ENCODE measurements at regions of chr2 and their contacts with region 1.

Region 1: GRCh38 chr2:207288628-207289027 is 122.9 kb upstream of the KLF7 start:
- DNase-seq: peak; percentile 63
- ATAC-seq: peak; percentile 40
- H3K4me3 Mint-ChIP-seq: no peak overlapping the region
- H3K27ac Mint-ChIP-seq: no peak overlapping the region
- H3K4me1 Mint-ChIP-seq: peaks cover 75% of the 10 kb centered on the region
- H3K27me3 Mint-ChIP-seq: peaks cover 2% of the 10 kb centered on the region

Region 2: GRCh38 chr2:206603275-206603674 is 685.4 kb before region 1 on chr2:
- CTCF ChIA-PET with region 1: no interaction called
- POLR2A ChIA-PET with region 1: no interaction called
- intact Hi-C with region 1: no loop called
- DNase-seq: no peak
- ATAC-seq: no peak
- H3K4me3 Mint-ChIP-seq: no peak overlapping the region
- H3K27ac Mint-ChIP-seq: no peak overlapping the region
- H3K4me1 Mint-ChIP-seq: no peaks in the 10 kb centered on the region
- H3K27me3 Mint-ChIP-seq: peaks cover 5% of the 10 kb centered on the region

Region 3: GRCh38 chr2:207311316-207312005 is 22.8 kb after region 1 on chr2:
- CTCF ChIA-PET with region 1: interaction called, 6 read pairs
- POLR2A ChIA-PET with region 1: interaction called, 3 read pairs
- intact Hi-C with region 1: loop called (anchors 1 to 2 kb)
- DNase-seq: peak; percentile 74
- ATAC-seq: peak; percentile 97
- H3K4me3 Mint-ChIP-seq: peak overlapping the region; percentile 13
- H3K27ac Mint-ChIP-seq: peak overlapping the region; percentile 96
- H3K4me1 Mint-ChIP-seq: peaks cover 32% of the 10 kb centered on the region
- H3K27me3 Mint-ChIP-seq: no peaks in the 10 kb centered on the region

Region 4: DNA sequence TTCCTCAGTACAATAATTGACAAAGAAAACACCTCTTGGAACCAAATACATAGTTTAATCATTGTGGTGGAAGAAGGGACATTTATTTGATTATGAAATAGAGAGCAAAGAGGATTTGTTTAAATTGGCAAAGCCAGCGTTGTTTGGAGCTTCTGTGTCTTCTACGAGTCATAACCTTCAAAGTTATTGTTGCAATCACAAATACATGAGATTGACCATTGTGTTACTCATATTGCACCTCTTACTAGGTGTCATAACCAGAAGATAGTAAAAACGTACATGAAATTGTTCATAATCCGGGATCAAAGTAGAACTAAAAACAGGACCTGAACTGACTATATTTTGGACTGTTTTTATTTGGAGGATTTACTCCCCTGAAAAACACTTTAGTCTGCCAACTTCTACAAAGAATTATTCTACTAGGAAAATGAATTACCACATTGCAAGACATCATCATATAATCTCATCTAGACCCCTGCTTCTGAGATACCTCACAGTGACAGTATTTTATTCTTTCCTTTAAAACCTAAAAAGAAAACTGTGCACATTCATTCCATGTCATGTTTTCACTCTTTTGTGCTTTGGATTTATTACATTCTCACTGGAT is 28.9 kb after region 1 on chr2:
- CTCF ChIA-PET with region 1: interaction called, 3 read pairs
- POLR2A ChIA-PET with region 1: no interaction called
- intact Hi-C with region 1: loop called in 1 of 2 experiments (anchors 2 kb)
- DNase-seq: no peak
- ATAC-seq: peak; percentile 79
- H3K4me3 Mint-ChIP-seq: no peak overlapping the region
- H3K27ac Mint-ChIP-seq: peak overlapping the region; percentile 58
- H3K4me1 Mint-ChIP-seq: peaks cover 24% of the 10 kb centered on the region
- H3K27me3 Mint-ChIP-seq: peaks cover 4% of the 10 kb centered on the region